ENCODE measurements at regions of chr7 and their contacts with region 1.

Region 1: GRCh38 chr7:139382439-139382838 is 22.7 kb downstream of the LUC7L2 start:
- DNase-seq: no peak
- ATAC-seq: no peak
- H3K4me3 ChIP-seq: no peak overlapping the region
- H3K4me3 Mint-ChIP-seq: no peak overlapping the region
- H3K27ac ChIP-seq: no peak overlapping the region
- H3K27ac Mint-ChIP-seq: no peak overlapping the region
- H3K4me1 ChIP-seq: no peaks in the 10 kb centered on the region
- H3K4me1 Mint-ChIP-seq: peaks cover 3 to 14% (median 6%) of the 10 kb centered on the region in 7 donors
- H3K27me3 ChIP-seq: no peaks in the 10 kb centered on the region
- H3K27me3 Mint-ChIP-seq: no peaks in the 10 kb centered on the region

Region 2: GRCh38 chr7:139416405-139416804 is 34.0 kb after region 1 on chr7:
- CTCF ChIA-PET with region 1: no interaction called
- POLR2A ChIA-PET with region 1: no interaction called
- intact Hi-C with region 1: loop called in 1 of 2 experiments (anchors 5 kb)
- DNase-seq: no peak
- ATAC-seq: no peak
- H3K4me3 ChIP-seq: no peak overlapping the region
- H3K4me3 Mint-ChIP-seq: no peak overlapping the region
- H3K27ac ChIP-seq: no peak overlapping the region
- H3K27ac Mint-ChIP-seq: peak overlapping the region in 5 of 9 donors; percentile 48 to 70 (median 61)
- H3K4me1 ChIP-seq: no peaks in the 10 kb centered on the region
- H3K4me1 Mint-ChIP-seq: peaks cover 0 to 7% (median 3%) of the 10 kb centered on the region in 7 donors
- H3K27me3 ChIP-seq: no peaks in the 10 kb centered on the region
- H3K27me3 Mint-ChIP-seq: no peaks in the 10 kb centered on the region